CD4-positive, alpha-beta T cell (primary cell): ENCODE measurements at regions of chr9 and their contacts with region 1.

Region 1: DNA sequence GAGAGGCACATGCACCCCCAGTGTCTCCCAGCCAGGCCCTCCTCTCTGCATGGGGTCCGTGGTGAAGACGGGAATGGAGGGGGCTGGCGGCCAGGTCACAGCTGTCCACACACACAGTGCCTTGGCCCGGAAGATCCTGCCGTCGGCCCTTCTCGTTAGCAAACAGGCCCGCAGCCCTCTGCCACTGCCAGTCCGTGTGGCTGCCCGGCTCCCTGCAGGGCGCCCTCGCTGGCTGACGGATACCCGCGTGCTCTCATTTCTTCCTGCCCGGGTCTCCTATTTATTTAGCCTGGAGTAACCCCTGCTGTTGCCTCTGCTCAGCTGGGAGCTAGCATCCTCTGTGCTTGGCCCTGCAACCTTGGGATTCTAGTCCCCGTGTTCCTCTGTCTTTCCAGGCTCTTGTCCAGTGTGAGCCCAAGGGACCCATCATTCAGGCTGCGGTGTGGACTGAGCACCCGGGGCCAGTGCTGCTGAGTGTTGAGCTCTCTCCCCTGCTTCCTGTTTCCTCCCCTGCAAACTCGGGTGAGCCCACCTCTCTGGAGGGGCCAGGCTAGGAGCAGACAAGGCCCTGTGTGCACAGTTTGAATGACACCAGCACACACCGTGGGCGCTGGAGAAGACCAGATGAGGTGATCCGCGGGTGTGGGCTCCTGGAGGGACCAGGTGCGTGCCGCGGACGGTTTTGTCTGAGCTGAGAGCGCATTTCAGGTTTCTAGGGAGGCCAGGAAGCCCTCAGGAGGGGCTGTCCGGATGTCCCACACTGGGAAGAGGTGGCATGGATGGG is 14.6 kb upstream of the RNU6ATAC start:
- DNase-seq: no peak
- ATAC-seq: no peak
- H3K4me3 ChIP-seq: no peak overlapping the region
- H3K4me3 Mint-ChIP-seq: no peak overlapping the region
- H3K27ac ChIP-seq: no peak overlapping the region
- H3K27ac Mint-ChIP-seq: no peak overlapping the region
- H3K4me1 ChIP-seq: peaks cover 18% of the 10 kb centered on the region
- H3K4me1 Mint-ChIP-seq: peaks cover 15% of the 10 kb centered on the region
- H3K27me3 ChIP-seq: peaks cover 5 to 9% of the 10 kb centered on the region in 2 experiments
- H3K27me3 Mint-ChIP-seq: no peaks in the 10 kb centered on the region
- CTCF ChIP-seq: no peak

Region 2: DNA sequence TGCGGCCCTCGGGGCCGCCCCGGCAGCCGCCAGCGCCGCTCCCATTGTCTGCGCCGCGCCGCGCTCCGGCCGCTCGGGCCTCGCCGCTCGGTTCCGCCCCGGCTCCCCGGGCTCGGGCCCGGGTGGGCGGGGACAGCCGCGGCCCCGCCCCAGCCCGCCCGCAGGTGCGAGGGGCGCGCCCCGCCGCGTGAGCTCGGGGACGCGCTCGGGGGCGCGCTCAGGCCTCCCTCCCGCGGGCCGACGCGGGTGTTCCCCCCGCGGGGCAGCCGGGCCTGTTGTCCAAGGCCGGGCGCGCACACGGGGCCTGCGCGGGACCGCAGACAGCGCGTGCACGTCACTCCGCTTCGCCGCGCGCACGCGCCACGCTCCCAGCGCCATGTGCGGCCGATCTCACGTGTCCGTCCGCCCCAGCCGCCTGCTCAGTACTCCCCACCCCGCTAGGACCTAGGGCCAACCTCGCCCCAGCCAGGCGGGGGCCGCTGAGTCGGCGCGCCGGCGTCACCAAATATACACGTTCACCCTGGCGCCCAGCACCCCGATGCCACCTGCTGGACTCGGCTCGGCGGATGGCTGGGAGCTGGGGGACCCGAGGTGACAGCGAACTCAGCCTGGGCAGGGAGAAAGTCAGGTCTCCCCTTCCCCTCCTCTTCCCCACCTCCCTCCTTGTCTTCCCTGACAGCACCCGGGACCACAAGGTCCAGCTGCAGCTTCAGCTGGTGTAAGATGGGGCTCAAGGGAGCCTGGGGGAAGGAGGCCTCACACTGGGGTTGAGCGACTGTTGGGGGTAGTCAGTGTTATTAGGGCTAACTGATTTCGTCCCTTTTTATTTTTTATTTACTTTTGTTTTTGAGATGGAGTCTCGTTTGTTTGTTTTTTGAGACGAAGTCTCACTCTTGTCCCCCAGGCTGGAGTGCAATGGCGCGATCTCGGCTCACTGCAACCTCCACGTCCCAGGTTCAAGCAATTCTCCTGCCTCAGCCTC is 1029.5 kb before region 1 on chr9:
- CTCF ChIA-PET with region 1: no interaction called
- POLR2A ChIA-PET with region 1: no interaction called
- intact Hi-C with region 1: no loop called
- DNase-seq: peak; percentile 64 to 95 (median 73)
- ATAC-seq: peak; percentile 43
- H3K4me3 ChIP-seq: peak overlapping the region; percentile 58
- H3K4me3 Mint-ChIP-seq: peak overlapping the region; percentile 88
- H3K27ac ChIP-seq: peak overlapping the region; percentile 60 to 74
- H3K27ac Mint-ChIP-seq: peak overlapping the region; percentile 87
- H3K4me1 ChIP-seq: peaks cover 43% of the 10 kb centered on the region
- H3K4me1 Mint-ChIP-seq: peaks cover 33% of the 10 kb centered on the region
- H3K27me3 ChIP-seq: no peaks in the 10 kb centered on the region
- H3K27me3 Mint-ChIP-seq: no peaks in the 10 kb centered on the region
- CTCF ChIP-seq: peak; percentile 44

Region 3: GRCh38 chr9:134067904-134068743 is 110.8 kb before region 1 on chr9 and contains the start of gene BRD3:
- CTCF ChIA-PET with region 1: no interaction called
- POLR2A ChIA-PET with region 1: no interaction called
- intact Hi-C with region 1: no loop called
- DNase-seq: peak; percentile 63 to 96 (median 78)
- ATAC-seq: peak; percentile 76
- H3K4me3 ChIP-seq: peak within 1 kb of the TSS; percentile 79
- H3K4me3 Mint-ChIP-seq: peak within 1 kb of the TSS; percentile 97
- H3K27ac ChIP-seq: peak within 1 kb of the TSS; percentile 79 to 84
- H3K27ac Mint-ChIP-seq: peak within 1 kb of the TSS; percentile 98
- H3K4me1 ChIP-seq: peaks cover 47% of the 10 kb centered on the region
- H3K4me1 Mint-ChIP-seq: peaks cover 37% of the 10 kb centered on the region
- H3K27me3 ChIP-seq: peaks cover 9 to 15% of the 10 kb centered on the region in 2 experiments
- H3K27me3 Mint-ChIP-seq: peaks cover 22% of the 10 kb centered on the region
- CTCF ChIP-seq: no peak
- total RNA-seq, gene BRD3: 26.7 to 29.0 TPM

Region 4: GRCh38 chr9:134204991-134205578 is 26.1 kb after region 1 on chr9:
- CTCF ChIA-PET with region 1: no interaction called
- POLR2A ChIA-PET with region 1: no interaction called
- intact Hi-C with region 1: no loop called
- DNase-seq: no peak
- ATAC-seq: no peak
- H3K4me3 ChIP-seq: no peak overlapping the region
- H3K4me3 Mint-ChIP-seq: no peak overlapping the region
- H3K27ac ChIP-seq: no peak overlapping the region
- H3K27ac Mint-ChIP-seq: no peak overlapping the region
- H3K4me1 ChIP-seq: no peaks in the 10 kb centered on the region
- H3K4me1 Mint-ChIP-seq: no peaks in the 10 kb centered on the region
- H3K27me3 ChIP-seq: no peaks in the 10 kb centered on the region
- H3K27me3 Mint-ChIP-seq: no peaks in the 10 kb centered on the region
- CTCF ChIP-seq: no peak

Region 5: DNA sequence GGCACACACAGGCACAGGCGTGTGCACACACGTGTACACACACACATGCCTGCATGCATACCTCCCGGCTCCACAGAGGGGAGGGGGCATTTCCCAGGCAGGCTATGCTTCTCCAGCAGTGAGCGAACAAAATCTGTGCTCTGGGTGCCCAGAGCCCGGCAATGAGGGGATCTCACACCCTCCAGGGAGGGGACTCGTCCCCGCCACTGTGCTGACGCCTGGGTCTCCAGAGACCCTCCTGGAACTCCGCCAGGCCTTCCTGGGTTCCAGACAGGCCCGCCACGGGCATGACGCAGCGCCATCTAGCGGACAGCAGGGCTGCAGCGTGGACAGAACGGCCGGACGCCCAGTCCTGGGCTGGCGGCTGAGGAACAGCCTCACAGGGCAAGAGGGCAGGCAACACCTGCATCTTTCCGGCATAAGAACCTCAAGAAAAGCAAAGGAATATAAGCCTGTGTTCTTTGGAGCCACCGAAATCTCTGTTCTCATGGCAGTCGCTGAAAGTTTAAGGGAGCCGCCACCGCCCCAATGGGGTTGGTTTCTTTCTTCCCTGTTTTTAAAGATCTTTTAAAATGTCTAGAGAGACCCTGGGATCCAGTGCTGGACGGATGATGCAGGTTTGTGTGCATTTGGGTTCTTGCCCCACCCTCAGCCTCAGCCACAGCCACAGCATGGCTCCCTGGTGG is 1165.0 kb after region 1 on chr9:
- CTCF ChIA-PET with region 1: no interaction called
- POLR2A ChIA-PET with region 1: no interaction called
- intact Hi-C with region 1: loop called in 1 of 2 experiments (anchors 10 kb)
- DNase-seq: peak; percentile 13 to 59 (median 28)
- ATAC-seq: no peak
- H3K4me3 ChIP-seq: no peak overlapping the region
- H3K4me3 Mint-ChIP-seq: no peak overlapping the region
- H3K27ac ChIP-seq: no peak overlapping the region
- H3K27ac Mint-ChIP-seq: no peak overlapping the region
- H3K4me1 ChIP-seq: no peaks in the 10 kb centered on the region
- H3K4me1 Mint-ChIP-seq: no peaks in the 10 kb centered on the region
- H3K27me3 ChIP-seq: peaks cover 0 to 6% of the 10 kb centered on the region in 2 experiments
- H3K27me3 Mint-ChIP-seq: peaks cover 10% of the 10 kb centered on the region
- CTCF ChIP-seq: peak; percentile 73

Region 6: GRCh38 chr9:135422341-135422944 is 1243.5 kb after region 1 on chr9:
- CTCF ChIA-PET with region 1: no interaction called
- POLR2A ChIA-PET with region 1: no interaction called
- intact Hi-C with region 1: no loop called
- DNase-seq: no peak
- ATAC-seq: no peak
- H3K4me3 ChIP-seq: no peak overlapping the region
- H3K4me3 Mint-ChIP-seq: no peak overlapping the region
- H3K27ac ChIP-seq: no peak overlapping the region
- H3K27ac Mint-ChIP-seq: no peak overlapping the region
- H3K4me1 ChIP-seq: no peaks in the 10 kb centered on the region
- H3K4me1 Mint-ChIP-seq: no peaks in the 10 kb centered on the region
- H3K27me3 ChIP-seq: peaks cover 0 to 2% of the 10 kb centered on the region in 2 experiments
- H3K27me3 Mint-ChIP-seq: peaks cover 23% of the 10 kb centered on the region
- CTCF ChIP-seq: no peak